AG04449 (cell line): ENCODE measurements at regions of chr15 and their contacts with region 1.

Region 1: DNA sequence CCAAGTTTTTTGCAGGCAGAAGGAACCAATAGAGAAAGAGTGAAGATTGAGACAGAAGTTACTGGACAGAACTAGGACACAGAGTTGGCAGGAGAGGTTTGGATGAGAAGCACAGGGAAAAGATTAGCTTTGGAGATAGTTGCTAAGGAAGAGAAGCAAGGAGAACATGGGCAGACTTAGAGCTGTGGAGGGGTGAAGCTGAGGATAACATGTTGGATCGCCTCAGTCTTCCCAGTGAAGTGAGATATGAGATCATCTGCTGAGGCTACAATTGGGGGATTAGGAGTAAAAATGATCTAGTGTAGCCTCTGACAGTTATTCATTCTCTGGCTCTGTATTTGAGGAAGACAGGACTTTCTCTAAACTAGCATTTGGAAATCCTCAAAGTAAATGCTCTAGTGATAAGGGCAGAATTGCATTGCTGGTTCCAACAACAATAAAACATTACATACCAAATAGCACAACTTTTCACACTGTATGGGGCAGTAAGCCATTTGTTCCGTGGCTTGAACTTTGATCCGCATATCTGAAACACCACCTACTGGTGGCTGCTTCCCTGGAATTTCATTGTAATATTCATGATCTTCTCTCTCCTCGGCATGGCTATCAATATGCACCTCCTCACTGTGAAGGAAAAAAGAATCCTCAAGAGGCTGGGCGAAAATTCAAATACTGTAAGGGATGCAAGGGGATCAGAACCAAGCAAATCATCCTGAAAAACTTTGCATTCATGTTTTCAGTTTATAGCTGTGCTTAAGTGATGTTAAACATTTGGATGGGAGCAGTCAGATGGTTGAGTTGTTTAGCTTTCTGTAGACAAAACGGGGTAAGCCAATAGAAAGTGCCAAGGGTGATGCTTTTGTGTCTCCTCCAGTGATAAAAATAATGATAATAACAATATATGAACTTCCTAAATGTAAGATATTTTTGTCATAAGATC is 22.2 kb upstream of the EID1 start:
- DNase-seq: peak; percentile 23
- H3K4me3 ChIP-seq: no peak overlapping the region
- CTCF ChIP-seq: peak; percentile 43

Region 2: DNA sequence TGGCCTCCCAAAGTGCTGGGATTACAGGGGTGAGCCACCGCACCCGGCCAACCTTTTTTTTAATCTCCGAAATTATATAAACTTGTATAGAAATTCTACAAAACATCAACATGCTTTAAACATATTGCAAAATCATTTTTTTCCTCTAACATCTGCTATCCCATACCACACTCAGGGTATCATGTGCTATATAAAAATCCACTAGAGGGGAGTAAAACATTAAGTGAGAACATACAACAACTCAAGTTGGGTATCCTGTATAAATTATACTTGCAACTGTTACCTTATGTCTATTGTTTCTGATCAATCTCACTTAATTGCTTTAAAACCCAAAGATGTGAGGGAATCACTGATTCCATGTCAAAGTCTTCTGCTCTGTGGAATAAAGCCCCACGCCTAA is 138.3 kb before region 1 on chr15:
- CTCF ChIA-PET with region 1: interaction called, 57 read pairs
- POLR2A ChIA-PET with region 1: no interaction called
- DNase-seq: no peak
- H3K4me3 ChIP-seq: no peak overlapping the region
- CTCF ChIP-seq: peak; percentile 8

Region 3: GRCh38 chr15:48766196-48766595 is 89.6 kb before region 1 on chr15:
- CTCF ChIA-PET with region 1: no interaction called
- POLR2A ChIA-PET with region 1: no interaction called
- DNase-seq: no peak
- H3K4me3 ChIP-seq: no peak overlapping the region
- CTCF ChIP-seq: no peak

Region 4: DNA sequence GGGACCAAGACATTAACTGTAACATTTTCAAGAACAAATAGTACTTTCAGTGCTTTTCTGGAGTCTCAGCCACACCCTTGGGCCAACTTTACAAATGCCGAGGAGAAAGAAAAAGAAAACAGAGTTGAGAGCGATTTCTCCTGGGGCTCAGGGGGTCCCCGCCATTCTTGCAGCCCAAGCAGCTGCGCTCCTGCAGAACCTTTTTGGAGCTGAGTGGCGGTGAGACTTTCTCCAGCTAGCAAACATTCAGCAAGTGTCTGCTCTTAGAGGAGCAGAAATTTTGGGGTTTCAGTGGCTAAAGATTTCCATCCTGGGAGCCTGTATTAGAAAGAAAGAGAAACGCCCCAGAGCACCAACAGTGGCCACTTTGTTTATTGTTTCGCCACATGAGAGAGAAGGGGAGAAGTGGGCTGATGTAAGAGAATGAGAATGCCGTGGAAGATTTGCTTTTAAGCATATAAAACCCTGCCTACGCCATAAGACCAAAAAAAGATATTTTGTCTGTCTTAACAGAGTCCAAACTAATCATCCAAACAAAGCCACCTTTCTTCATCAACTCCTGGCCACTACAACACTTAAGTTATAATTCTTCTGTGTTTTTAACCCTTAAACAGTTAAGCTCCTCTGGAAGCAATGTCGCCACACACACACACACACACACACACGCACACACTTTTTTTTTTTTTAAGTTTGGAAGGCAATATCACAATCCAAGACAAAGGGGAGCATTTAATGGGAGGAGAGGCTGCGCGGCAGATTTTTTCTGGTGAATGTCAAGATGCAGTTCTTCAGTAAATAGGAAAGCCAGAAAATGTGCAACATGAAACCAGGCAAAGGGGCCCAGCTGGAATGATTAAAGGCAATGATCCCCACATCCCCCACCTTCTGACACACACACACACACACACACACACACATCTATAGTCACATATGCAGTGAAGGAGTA is 41.4 kb after region 1 on chr15:
- CTCF ChIA-PET with region 1: no interaction called
- POLR2A ChIA-PET with region 1: no interaction called
- DNase-seq: no peak
- H3K4me3 ChIP-seq: peak overlapping the region; percentile 28
- CTCF ChIP-seq: no peak